Endothelial cell of umbilical vein (primary cell): ENCODE measurements at regions of chr7 and their contacts with region 1.

Region 1: GRCh38 chr7:133081599-133082389 is at the start of gene CHCHD3:
- DNase-seq: peak; percentile 99
- H3K4me3 ChIP-seq: peak within 1 kb of the TSS; percentile 88
- H3K27ac ChIP-seq: peak within 1 kb of the TSS; percentile 80
- H3K4me1 ChIP-seq: peaks cover 14% of the 10 kb centered on the region
- H3K27me3 ChIP-seq: no peaks in the 10 kb centered on the region
- CTCF ChIP-seq: no peak
- POLR2A ChIP-seq: peak; percentile 68
- total RNA-seq, gene CHCHD3: 63.7 and 65.3 TPM in 2 replicates

Region 2: GRCh38 chr7:133230591-133231194 is 148.9 kb after region 1 on chr7:
- CTCF ChIA-PET with region 1: no interaction called
- POLR2A ChIA-PET with region 1: no interaction called
- dilution Hi-C with region 1: no loop called
- intact Hi-C with region 1: loop called (anchors 5 kb)
- DNase-seq: peak; percentile 73
- H3K4me3 ChIP-seq: no peak overlapping the region
- H3K27ac ChIP-seq: no peak overlapping the region
- H3K4me1 ChIP-seq: peaks cover 9% of the 10 kb centered on the region
- H3K27me3 ChIP-seq: peaks cover 21 to 36% of the 10 kb centered on the region in 2 experiments
- CTCF ChIP-seq: peak; percentile 60 to 62
- POLR2A ChIP-seq: no peak

Region 3: DNA sequence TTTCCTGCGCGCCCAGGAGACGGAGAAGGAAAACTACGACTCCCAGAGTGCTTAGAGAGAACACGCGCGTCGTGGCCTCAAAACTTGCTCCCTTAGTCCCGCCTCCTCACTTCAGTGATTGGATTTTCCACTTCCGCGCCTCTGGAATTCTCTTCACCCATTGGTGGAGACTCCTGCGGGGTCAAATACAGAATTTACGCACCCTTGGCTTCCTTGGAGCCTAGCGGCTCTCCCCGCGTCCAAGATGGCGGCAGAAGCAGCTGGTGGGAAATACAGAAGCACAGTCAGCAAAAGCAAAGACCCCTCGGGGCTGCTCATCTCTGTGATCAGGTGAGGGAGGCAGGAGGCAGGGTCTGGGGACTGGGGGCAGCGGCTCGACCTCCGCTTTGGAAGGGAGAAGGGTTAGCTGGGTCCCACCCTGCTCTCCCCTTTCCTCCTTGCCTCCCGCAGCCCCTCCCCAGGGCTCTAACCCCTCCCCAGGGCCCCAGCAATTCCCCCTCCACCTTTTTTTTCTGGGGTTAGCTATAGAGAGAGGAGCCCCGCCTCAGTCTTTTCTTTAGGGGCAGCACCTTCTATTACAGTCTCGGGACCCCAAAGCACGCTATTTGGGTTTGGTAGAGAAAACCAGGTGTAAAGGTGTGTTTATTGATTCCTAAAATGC is 171.2 kb after region 1 on chr7 and contains the start of gene EXOC4:
- CTCF ChIA-PET with region 1: no interaction called
- POLR2A ChIA-PET with region 1: no interaction called
- dilution Hi-C with region 1: no loop called
- intact Hi-C with region 1: loop called (anchors 5 kb)
- DNase-seq: peak; percentile 99
- H3K4me3 ChIP-seq: peak within 1 kb of the TSS; percentile 88 to 95 (median 94)
- H3K27ac ChIP-seq: peak within 1 kb of the TSS; percentile 57
- H3K4me1 ChIP-seq: peaks cover 10% of the 10 kb centered on the region
- H3K27me3 ChIP-seq: no peaks in the 10 kb centered on the region
- CTCF ChIP-seq: no peak
- POLR2A ChIP-seq: peak; percentile 83
- total RNA-seq, gene EXOC4: 69.6 and 73.1 TPM in 2 replicates

Region 4: GRCh38 chr7:133344275-133344674 is 262.5 kb after region 1 on chr7:
- CTCF ChIA-PET with region 1: no interaction called
- POLR2A ChIA-PET with region 1: no interaction called
- dilution Hi-C with region 1: no loop called
- intact Hi-C with region 1: loop called (anchors 5 kb)
- DNase-seq: peak; percentile 42
- H3K4me3 ChIP-seq: no peak overlapping the region
- H3K27ac ChIP-seq: no peak overlapping the region
- H3K4me1 ChIP-seq: no peaks in the 10 kb centered on the region
- H3K27me3 ChIP-seq: no peaks in the 10 kb centered on the region
- CTCF ChIP-seq: peak; percentile 28 to 34
- POLR2A ChIP-seq: no peak

Region 5: DNA sequence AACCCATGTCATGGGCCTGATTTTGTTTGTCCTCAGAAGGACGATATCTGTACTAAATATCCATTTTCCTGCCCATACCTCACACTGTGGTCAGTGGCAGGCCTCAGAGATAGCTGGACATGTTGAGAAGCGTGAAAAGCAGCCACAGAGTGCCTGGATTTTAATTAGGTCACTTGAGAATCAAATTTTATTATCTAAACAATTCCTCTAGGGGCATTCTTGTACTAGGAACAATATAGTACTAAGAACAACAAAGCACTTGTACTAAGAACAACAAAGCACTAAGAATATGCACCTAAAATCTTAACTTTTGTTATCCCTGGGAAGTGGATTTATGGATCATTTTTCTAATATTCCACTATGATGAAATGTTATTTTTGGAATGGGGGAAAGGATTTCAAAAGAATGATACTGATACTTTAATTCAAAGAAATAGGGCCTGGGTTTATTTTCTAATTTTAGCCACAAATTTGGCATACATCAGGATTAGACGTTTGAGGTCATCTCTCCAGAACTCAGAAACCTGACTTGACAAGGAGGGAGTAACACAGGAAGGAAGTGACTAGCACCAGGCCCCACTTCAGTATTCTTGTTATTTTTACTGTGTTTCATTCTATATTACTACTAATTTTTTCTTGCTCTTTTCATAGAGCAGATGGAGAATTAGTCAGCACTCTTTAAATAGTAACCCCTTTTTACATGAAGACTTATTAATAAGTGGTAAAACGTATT is 283.3 kb after region 1 on chr7:
- CTCF ChIA-PET with region 1: no interaction called
- POLR2A ChIA-PET with region 1: no interaction called
- dilution Hi-C with region 1: no loop called
- intact Hi-C with region 1: loop called (anchors 5 kb)
- DNase-seq: peak; percentile 86
- H3K4me3 ChIP-seq: no peak overlapping the region
- H3K27ac ChIP-seq: peak overlapping the region; percentile 92
- H3K4me1 ChIP-seq: peaks cover 26% of the 10 kb centered on the region
- H3K27me3 ChIP-seq: no peaks in the 10 kb centered on the region
- CTCF ChIP-seq: no peak
- POLR2A ChIP-seq: no peak

Region 6: GRCh38 chr7:133386205-133386604 is 304.4 kb after region 1 on chr7:
- CTCF ChIA-PET with region 1: no interaction called
- POLR2A ChIA-PET with region 1: interaction called, 10 read pairs
- dilution Hi-C with region 1: no loop called
- intact Hi-C with region 1: no loop called
- DNase-seq: no peak
- H3K4me3 ChIP-seq: no peak overlapping the region
- H3K27ac ChIP-seq: no peak overlapping the region
- H3K4me1 ChIP-seq: no peaks in the 10 kb centered on the region
- H3K27me3 ChIP-seq: no peaks in the 10 kb centered on the region
- CTCF ChIP-seq: no peak
- POLR2A ChIP-seq: no peak

Region 7: DNA sequence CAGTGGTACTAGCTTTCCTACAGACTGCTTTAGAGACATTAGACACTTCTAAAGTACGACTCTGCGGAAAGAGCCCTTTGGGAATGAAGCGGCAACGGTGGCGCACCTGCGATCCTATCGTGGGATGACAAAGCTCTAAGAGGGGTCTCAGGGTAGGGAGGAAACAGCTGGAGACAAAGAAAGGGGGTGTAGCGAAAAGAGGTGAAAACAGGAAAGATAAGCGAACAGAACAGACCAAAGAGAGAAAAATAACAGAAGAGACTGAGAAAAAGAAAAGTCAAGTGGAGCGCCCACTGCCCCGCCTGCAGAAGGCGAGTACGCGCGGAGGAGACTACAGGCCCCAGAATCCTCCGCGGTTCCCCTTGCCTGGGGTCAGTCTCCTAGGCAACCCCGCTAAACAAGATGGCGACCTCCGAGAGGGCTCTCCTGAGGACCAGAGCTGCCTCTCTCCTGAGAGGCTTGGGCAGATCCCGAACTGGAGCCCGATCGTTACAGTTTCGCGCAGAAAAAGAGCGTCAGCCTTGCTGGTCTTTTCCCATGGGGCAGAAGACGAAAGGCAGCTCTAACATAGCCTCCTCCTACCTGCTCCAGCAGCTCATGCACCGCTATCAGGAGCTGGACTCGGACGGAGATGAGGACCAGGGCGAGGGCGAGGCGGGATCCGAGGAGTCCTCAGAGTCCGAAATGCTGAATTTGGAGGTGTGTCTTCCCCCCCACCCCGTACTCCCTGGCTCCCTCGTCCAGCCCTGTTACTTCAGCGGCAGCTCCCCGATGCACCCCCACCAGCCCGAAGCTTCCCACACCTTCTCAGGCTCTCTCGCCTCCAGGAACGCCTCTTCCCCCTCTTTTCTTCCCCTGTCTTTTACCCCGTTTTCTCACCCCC is 1045.4 kb after region 1 on chr7 and contains the start of gene LRGUK:
- CTCF ChIA-PET with region 1: no interaction called
- POLR2A ChIA-PET with region 1: no interaction called
- dilution Hi-C with region 1: no loop called
- intact Hi-C with region 1: loop called (anchors 5 kb)
- DNase-seq: peak; percentile 73
- H3K4me3 ChIP-seq: peak within 1 kb of the TSS; percentile 20 to 62 (median 46)
- H3K27ac ChIP-seq: no peak within 1 kb of the TSS
- H3K4me1 ChIP-seq: no peaks in the 10 kb centered on the region
- H3K27me3 ChIP-seq: peaks cover 11 to 39% of the 10 kb centered on the region in 2 experiments
- CTCF ChIP-seq: no peak
- POLR2A ChIP-seq: no peak
- total RNA-seq, gene LRGUK: 0.11 TPM in 1 of 2 replicates, not detected in the other